Psoas muscle (tissue), 8 donors: ENCODE measurements at regions of chr7 and their contacts with region 1.

Region 1: GRCh38 chr7:80890426-80891258 is 28.2 kb downstream of the SEMA3C start:
- DNase-seq: no peak
- ATAC-seq: peak in 2 of 4 donors; percentile 41 to 50
- H3K4me3 ChIP-seq: no peak overlapping the region
- H3K27ac ChIP-seq: no peak overlapping the region
- H3K4me1 ChIP-seq: peaks cover 7% of the 10 kb centered on the region
- H3K27me3 ChIP-seq: no peaks in the 10 kb centered on the region
- CTCF ChIP-seq: no peak

Region 2: DNA sequence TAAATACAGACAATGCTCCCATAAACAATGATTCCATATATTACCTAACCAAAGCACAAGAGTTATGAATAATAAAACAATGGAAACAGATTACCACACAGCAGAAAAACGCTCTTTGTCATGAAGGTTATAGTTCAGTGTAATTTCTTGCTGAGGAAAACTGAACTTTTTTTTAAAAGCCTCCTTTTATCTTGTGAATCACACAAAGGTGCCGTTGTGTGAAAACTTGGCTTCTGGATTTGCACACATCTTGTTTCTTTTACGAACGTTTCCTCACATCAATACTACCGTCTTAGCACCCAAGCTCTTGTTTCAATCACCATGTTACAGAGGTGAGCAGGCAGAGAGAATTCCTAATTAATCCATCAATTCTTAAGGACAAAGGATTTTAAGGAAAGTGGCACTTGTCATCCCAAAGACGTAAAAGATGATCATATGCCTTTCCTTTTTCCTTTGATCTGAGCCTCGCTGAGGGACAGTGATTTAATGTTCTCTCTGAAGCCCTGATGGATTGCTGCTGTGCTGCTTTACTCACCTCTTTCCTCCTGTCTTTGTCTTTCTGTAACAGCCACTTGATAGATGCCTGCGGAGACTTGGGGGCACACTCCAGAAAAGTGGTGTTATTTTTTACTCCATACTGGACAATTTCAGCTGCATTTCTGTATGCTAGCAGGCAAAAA is 142.1 kb before region 1 on chr7:
- intact Hi-C with region 1: no loop called
- DNase-seq: no peak
- ATAC-seq: no peak
- H3K4me3 ChIP-seq: no peak overlapping the region
- H3K27ac ChIP-seq: no peak overlapping the region
- H3K4me1 ChIP-seq: no peaks in the 10 kb centered on the region
- H3K27me3 ChIP-seq: no peaks in the 10 kb centered on the region
- CTCF ChIP-seq: no peak

Region 3: DNA sequence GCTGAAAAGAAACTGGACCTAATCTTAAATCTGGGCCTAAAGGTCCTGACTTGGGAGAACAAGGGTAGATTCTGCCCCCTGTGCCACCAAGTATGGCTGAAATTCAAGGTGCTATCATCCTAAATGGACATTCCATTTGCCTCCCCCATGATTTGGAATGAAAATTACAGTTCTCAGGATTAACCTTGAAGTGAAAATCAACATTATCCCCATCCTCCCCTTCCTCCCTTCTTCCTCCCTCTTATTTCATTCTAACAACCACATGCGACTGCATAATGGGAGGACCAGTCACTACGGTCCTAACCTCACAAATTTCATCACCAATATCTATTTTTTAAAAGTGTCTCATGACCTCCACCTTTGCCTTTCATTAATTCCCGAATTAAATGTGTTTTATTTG is 33.9 kb before region 1 on chr7:
- intact Hi-C with region 1: loop called in 1 of 2 experiments (anchors 1 kb)
- DNase-seq: no peak
- ATAC-seq: no peak
- H3K4me3 ChIP-seq: no peak overlapping the region
- H3K27ac ChIP-seq: no peak overlapping the region
- H3K4me1 ChIP-seq: peaks cover 14% of the 10 kb centered on the region
- H3K27me3 ChIP-seq: no peaks in the 10 kb centered on the region
- CTCF ChIP-seq: no peak